Endothelial cell of umbilical vein (primary cell): ENCODE measurements at regions of chr2 and their contacts with region 1.

Region 1: GRCh38 chr2:24360050-24360962 is at the start of gene ITSN2:
- DNase-seq: peak; percentile 78
- H3K4me3 ChIP-seq: peak within 1 kb of the TSS; percentile 81 to 97 (median 90)
- H3K27ac ChIP-seq: peak within 1 kb of the TSS; percentile 79
- H3K4me1 ChIP-seq: peaks cover 24% of the 10 kb centered on the region
- H3K27me3 ChIP-seq: no peaks in the 10 kb centered on the region
- CTCF ChIP-seq: no peak
- POLR2A ChIP-seq: peak; percentile 86
- total RNA-seq, gene ITSN2: 56.8 and 60.1 TPM in 2 replicates

Region 2: DNA sequence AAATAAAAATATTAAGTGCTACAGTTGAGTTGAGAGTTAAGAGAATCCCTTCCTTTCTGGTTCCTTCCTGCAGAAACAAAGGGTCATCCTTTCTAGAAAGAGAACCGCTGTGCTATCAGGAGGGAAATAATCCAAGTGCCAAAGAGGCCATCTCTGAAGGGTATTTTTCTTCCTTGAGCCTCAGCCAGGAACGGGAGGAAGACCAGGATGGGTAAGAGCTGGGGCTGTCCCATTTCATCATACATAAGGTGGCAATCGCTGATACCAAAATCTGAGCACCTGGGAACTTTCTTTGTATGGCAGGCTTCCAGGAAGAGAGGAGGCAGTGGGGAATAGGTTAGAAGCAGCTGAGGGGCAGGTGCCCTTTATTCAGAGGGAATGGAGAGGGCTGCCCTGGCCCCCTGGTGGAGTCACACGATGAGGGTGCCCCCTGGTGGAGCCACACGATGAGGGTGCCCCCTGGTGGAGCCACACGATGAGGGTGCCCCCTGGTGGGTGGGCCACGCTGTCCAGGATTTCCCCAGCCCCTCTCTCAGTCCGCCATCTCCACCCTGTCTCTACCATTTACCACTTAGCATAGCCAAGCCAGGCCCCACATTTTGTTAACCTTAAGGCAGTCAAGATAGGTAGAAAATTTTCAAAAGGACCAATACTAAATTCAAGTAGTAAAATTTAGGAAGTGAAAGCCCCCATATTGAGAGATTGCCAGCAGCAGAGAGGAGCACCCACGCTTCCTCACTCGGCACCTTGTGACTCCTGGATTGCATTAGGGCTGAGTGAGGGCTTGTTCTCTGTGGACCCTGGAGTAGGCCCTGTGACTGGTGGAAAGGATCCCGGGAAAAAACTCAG is 196.0 kb before region 1 on chr2:
- CTCF ChIA-PET with region 1: no interaction called
- POLR2A ChIA-PET with region 1: no interaction called
- dilution Hi-C with region 1: no loop called
- intact Hi-C with region 1: no loop called
- DNase-seq: no peak
- H3K4me3 ChIP-seq: no peak overlapping the region
- H3K27ac ChIP-seq: no peak overlapping the region
- H3K4me1 ChIP-seq: no peaks in the 10 kb centered on the region
- H3K27me3 ChIP-seq: no peaks in the 10 kb centered on the region
- CTCF ChIP-seq: peak; percentile 64 to 76
- POLR2A ChIP-seq: no peak

Region 3: DNA sequence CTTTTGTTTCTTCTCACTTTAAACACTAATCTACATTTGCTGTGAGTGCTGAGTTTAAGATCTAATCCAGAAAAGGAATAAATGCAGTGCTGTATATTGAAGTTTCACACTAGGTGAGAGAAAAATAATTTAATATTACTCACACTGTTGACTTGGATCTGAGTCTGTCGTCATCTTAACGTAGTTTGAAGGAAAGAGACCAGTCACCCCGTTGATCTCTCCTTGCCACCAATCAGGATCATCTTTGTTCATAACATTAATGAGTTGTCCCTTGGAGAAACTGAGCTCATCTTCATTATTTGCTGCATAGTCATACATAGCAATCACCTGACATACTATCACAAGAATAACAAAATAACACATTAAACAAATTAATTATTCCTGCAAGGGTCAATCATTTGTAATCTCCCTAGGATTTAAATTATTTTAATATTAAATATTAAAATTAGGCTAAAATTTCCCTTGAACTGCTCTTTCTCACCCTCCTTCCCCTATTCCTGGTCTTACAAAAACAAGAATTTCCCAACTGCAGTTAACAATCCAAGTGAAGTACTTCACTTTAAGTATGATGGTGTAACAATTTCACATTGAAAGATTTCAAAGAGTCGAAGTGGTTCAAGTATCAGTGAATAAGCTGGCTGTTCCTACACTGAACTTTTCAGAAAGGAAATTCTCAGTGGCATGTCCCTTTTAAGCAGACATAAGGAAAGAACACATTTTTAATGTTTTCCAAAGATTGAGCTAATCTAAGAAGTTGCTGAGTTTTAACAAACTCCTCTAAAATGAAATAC is 114.1 kb before region 1 on chr2:
- CTCF ChIA-PET with region 1: no interaction called
- POLR2A ChIA-PET with region 1: no interaction called
- dilution Hi-C with region 1: no loop called
- intact Hi-C with region 1: loop called (anchors 5 kb)
- DNase-seq: no peak
- H3K4me3 ChIP-seq: no peak overlapping the region
- H3K27ac ChIP-seq: no peak overlapping the region
- H3K4me1 ChIP-seq: no peaks in the 10 kb centered on the region
- H3K27me3 ChIP-seq: no peaks in the 10 kb centered on the region
- CTCF ChIP-seq: no peak
- POLR2A ChIP-seq: no peak

Region 4: DNA sequence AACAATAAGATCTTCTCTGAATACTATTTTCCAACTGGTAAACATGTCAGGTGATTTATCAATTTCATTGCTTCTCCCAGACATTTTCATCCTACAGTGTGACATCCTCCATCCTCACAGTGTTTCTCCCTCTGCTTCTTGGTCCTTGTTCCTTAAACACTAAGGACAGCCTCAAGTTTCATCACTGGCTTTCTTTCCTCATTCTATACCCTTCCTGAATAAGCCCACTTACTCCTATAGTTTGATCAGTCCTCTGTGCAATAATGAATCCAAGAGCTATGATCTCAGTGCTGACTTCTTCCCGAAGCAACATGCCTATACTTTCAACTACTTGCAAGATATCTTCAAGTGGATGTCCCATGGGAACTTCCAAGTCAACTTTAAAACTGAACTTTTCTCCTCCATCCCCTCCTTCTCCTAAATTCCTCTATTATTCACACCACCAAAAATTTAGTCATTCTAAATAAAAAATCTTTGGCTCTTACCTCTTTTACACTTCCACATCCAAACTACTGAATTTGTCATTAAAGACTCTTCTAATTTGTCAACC is 97.8 kb before region 1 on chr2:
- CTCF ChIA-PET with region 1: no interaction called
- POLR2A ChIA-PET with region 1: no interaction called
- dilution Hi-C with region 1: no loop called
- intact Hi-C with region 1: no loop called
- DNase-seq: peak; percentile 36
- H3K4me3 ChIP-seq: no peak overlapping the region
- H3K27ac ChIP-seq: no peak overlapping the region
- H3K4me1 ChIP-seq: peaks cover 24% of the 10 kb centered on the region
- H3K27me3 ChIP-seq: no peaks in the 10 kb centered on the region
- CTCF ChIP-seq: no peak
- POLR2A ChIP-seq: no peak

Region 5: GRCh38 chr2:24329700-24330099 is 30.6 kb before region 1 on chr2:
- CTCF ChIA-PET with region 1: no interaction called
- POLR2A ChIA-PET with region 1: no interaction called
- dilution Hi-C with region 1: no loop called
- intact Hi-C with region 1: loop called (anchors 2 kb)
- DNase-seq: peak; percentile 58
- H3K4me3 ChIP-seq: no peak overlapping the region
- H3K27ac ChIP-seq: no peak overlapping the region
- H3K4me1 ChIP-seq: peaks cover 33% of the 10 kb centered on the region
- H3K27me3 ChIP-seq: no peaks in the 10 kb centered on the region
- CTCF ChIP-seq: no peak
- POLR2A ChIP-seq: no peak

Region 6: DNA sequence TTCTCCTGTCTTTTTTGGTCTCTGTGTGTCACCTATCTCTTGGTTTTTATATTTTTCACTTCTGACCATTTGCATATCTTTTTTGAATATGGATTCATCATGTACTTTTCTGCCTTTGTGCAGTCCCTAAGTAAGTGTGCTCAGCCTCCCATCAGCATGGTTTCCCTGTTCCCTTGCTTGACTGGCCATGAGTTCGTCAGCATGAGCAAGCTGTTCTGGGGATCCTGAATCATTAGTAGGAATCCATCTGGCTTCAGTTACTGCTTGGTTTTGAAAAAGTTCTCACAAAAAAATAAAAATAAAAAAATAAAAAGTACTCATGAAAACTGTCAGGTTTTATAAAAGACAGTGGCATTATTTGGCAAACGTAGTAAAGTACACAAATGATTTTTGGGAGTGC is 274.9 kb after region 1 on chr2:
- CTCF ChIA-PET with region 1: no interaction called
- POLR2A ChIA-PET with region 1: no interaction called
- dilution Hi-C with region 1: no loop called
- intact Hi-C with region 1: no loop called
- DNase-seq: no peak
- H3K4me3 ChIP-seq: no peak overlapping the region
- H3K27ac ChIP-seq: no peak overlapping the region
- H3K4me1 ChIP-seq: no peaks in the 10 kb centered on the region
- H3K27me3 ChIP-seq: no peaks in the 10 kb centered on the region
- CTCF ChIP-seq: no peak
- POLR2A ChIP-seq: no peak